ENCODE measurements at regions of chr3 and their contacts with region 1.

Region 1: DNA sequence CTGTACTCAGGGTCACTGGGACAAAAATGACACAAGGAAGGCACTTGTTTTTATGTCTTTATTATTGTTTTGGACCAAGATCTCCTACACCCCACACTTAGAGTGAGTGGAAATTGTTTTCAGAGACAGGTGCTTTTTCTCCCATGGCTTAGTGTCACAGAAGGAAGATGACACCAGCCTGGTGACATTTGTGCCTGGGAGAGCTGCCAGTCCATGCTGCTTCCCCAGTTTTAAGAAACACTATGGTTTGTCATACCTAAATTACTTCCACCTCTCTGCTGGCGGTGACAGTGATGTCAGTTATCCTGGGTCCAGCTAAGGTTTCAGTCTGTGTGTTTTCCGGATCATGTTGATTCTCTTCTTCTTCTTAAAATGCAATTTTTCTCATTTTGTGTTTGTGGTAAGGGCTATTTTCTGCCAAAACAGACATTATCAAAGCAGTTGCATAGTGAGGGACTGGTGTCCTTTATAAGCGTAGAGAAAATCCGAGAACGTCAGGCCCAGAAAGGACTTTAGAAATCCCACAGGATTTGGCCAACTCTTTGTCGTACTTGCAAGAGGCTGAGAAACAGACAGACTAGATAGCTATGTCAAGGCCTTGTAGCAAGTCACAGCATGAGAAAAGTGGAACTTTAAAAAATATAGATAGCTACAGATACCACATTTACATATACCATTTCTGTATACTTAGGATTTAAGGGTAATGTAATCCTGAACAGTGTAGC is 149.5 kb downstream of the TP63 start:
- DNase-seq: peak; percentile 85 to 92
- ATAC-seq: peak; percentile 98
- H3K4me3 ChIP-seq: peak overlapping the region; percentile 31 to 40 (median 38)
- H3K27ac ChIP-seq: peak overlapping the region; percentile 82 to 90 (median 89)
- H3K4me1 ChIP-seq: peaks cover 30 to 32% of the 10 kb centered on the region in 2 donors
- H3K27me3 ChIP-seq: no peaks in the 10 kb centered on the region
- CTCF ChIP-seq: no peak
- POLR2A ChIP-seq: peak; percentile 12 to 40

Region 2: GRCh38 chr3:189813647-189814240 is 33.0 kb after region 1 on chr3:
- in situ Hi-C with region 1: no loop called
- intact Hi-C with region 1: loop called (anchors 1 kb)
- DNase-seq: peak; percentile 90 to 96
- ATAC-seq: peak; percentile 92 to 94
- H3K4me3 ChIP-seq: peak overlapping the region in 3 of 4 donors; percentile 15 to 29 (median 23)
- H3K27ac ChIP-seq: peak overlapping the region; percentile 92 to 95 (median 93)
- H3K4me1 ChIP-seq: peaks cover 30 to 64% of the 10 kb centered on the region in 2 donors
- H3K27me3 ChIP-seq: no peaks in the 10 kb centered on the region
- CTCF ChIP-seq: no peak
- POLR2A ChIP-seq: peak in 1 of 2 donors; percentile 30

Region 3: GRCh38 chr3:189871418-189871817 is 90.7 kb after region 1 on chr3:
- in situ Hi-C with region 1: no loop called
- intact Hi-C with region 1: no loop called
- DNase-seq: no peak
- ATAC-seq: no peak
- H3K4me3 ChIP-seq: no peak overlapping the region
- H3K27ac ChIP-seq: no peak overlapping the region
- H3K4me1 ChIP-seq: no peaks in the 10 kb centered on the region
- H3K27me3 ChIP-seq: no peaks in the 10 kb centered on the region
- CTCF ChIP-seq: no peak
- POLR2A ChIP-seq: no peak